Ascending aorta (tissue), 2 donors: ENCODE measurements at regions of chr16 and their contacts with region 1.

Region 1: GRCh38 chr16:88706288-88706964 is at the starts of genes CTU2 and RNF166:
- DNase-seq: peak; percentile 64 to 94
- H3K4me3 ChIP-seq: peak within 1 kb of the TSS; percentile 94 to 98
- H3K27ac ChIP-seq: peak within 1 kb of the TSS; percentile 73 to 81
- H3K4me1 ChIP-seq: peaks cover 9 to 21% of the 10 kb centered on the region in 2 donors
- H3K27me3 ChIP-seq: no peaks in the 10 kb centered on the region
- CTCF ChIP-seq: no peak
- total RNA-seq, gene CTU2: 4.2 TPM
- total RNA-seq, gene RNF166: 44.3 TPM

Region 2: GRCh38 chr16:87765776-87766484 is 940.5 kb before region 1 on chr16 and contains the start of gene KLHDC4:
- intact Hi-C with region 1: loop called (anchors 5 kb)
- DNase-seq: peak; percentile 57 to 94
- H3K4me3 ChIP-seq: peak within 1 kb of the TSS; percentile 72 to 81
- H3K27ac ChIP-seq: peak within 1 kb of the TSS; percentile 81 to 86
- H3K4me1 ChIP-seq: peaks cover 8 to 9% of the 10 kb centered on the region in 2 donors
- H3K27me3 ChIP-seq: no peaks in the 10 kb centered on the region
- CTCF ChIP-seq: no peak
- total RNA-seq, gene KLHDC4: 38.4 TPM

Region 3: GRCh38 chr16:87950765-87951549 is 755.5 kb before region 1 on chr16 and contains the start of gene BANP:
- intact Hi-C with region 1: loop called (anchors 2 kb)
- DNase-seq: peak; percentile 96 to 99
- H3K4me3 ChIP-seq: peak within 1 kb of the TSS; percentile 95 to 99
- H3K27ac ChIP-seq: peak within 1 kb of the TSS; percentile 97 to 98
- H3K4me1 ChIP-seq: peaks cover 0 to 9% of the 10 kb centered on the region in 2 donors
- H3K27me3 ChIP-seq: no peaks in the 10 kb centered on the region
- CTCF ChIP-seq: peak; percentile 14 to 39 (median 36)
- total RNA-seq, gene BANP: 23.4 TPM

Region 4: DNA sequence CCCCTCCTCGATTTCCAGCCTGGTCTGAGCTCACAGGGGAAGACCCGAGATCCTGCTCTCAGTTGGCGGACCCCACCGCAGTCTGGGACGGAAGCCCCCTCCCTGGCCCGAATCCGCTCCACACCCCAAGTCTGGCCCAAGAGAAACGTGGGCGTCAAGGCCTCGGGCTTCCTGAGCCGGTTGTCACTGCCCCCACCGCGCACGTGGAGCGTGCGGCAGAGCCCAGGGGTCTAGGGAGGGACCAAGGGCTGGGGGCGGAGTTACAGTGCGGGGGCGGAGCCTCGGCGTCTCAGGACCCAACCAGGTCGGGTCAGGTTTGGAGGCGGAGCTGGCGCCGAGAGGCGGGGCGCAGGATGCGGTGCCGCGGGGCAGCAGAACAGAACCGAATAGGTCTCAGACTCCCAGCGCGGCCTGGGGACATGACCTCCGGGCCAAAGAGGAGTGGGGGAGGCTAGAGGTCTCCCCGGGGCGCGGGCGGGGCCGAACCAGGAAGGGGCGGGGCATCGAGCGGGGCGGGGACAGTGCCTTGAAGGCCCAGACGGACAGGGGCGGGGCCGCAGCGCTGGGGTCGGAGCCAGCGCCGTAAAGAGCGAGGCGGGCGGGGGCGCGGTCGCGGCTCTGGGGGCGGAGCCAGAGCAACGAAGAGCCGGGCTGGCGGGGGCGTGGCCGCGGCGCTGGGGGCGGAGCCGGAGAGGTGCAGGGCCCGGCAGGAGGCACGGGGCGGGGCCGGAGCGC is 253.8 kb before region 1 on chr16:
- intact Hi-C with region 1: loop called (anchors 2 kb)
- DNase-seq: peak; percentile 84 to 98
- H3K4me3 ChIP-seq: peak overlapping the region; percentile 75 to 84
- H3K27ac ChIP-seq: peak overlapping the region; percentile 56 to 58
- H3K4me1 ChIP-seq: peaks cover 7 to 24% of the 10 kb centered on the region in 2 donors
- H3K27me3 ChIP-seq: no peaks in the 10 kb centered on the region
- CTCF ChIP-seq: no peak

Region 5: GRCh38 chr16:88662843-88663606 is 43.4 kb before region 1 on chr16 and contains the start of gene MVD:
- intact Hi-C with region 1: loop called (anchors 2 kb)
- DNase-seq: peak; percentile 93 to 98
- H3K4me3 ChIP-seq: peak within 1 kb of the TSS; percentile 87 to 89
- H3K27ac ChIP-seq: peak within 1 kb of the TSS; percentile 68 to 72
- H3K4me1 ChIP-seq: peaks cover 0 to 11% of the 10 kb centered on the region in 2 donors
- H3K27me3 ChIP-seq: no peaks in the 10 kb centered on the region
- CTCF ChIP-seq: no peak
- total RNA-seq, gene MVD: 72.9 TPM

Region 6: GRCh38 chr16:88856828-88857733 is 150.7 kb after region 1 on chr16 and contains the starts of genes GALNS and TRAPPC2L:
- intact Hi-C with region 1: loop called (anchors 2 kb)
- DNase-seq: peak; percentile 92 to 99
- H3K4me3 ChIP-seq: peak within 1 kb of the TSS; percentile 64 to 87
- H3K27ac ChIP-seq: peak within 1 kb of the TSS; percentile 54 to 66
- H3K4me1 ChIP-seq: peaks cover 13 to 14% of the 10 kb centered on the region in 2 donors
- H3K27me3 ChIP-seq: no peaks in the 10 kb centered on the region
- CTCF ChIP-seq: no peak
- total RNA-seq, gene GALNS: 62.2 TPM
- total RNA-seq, gene TRAPPC2L: 7.6 TPM

Region 7: DNA sequence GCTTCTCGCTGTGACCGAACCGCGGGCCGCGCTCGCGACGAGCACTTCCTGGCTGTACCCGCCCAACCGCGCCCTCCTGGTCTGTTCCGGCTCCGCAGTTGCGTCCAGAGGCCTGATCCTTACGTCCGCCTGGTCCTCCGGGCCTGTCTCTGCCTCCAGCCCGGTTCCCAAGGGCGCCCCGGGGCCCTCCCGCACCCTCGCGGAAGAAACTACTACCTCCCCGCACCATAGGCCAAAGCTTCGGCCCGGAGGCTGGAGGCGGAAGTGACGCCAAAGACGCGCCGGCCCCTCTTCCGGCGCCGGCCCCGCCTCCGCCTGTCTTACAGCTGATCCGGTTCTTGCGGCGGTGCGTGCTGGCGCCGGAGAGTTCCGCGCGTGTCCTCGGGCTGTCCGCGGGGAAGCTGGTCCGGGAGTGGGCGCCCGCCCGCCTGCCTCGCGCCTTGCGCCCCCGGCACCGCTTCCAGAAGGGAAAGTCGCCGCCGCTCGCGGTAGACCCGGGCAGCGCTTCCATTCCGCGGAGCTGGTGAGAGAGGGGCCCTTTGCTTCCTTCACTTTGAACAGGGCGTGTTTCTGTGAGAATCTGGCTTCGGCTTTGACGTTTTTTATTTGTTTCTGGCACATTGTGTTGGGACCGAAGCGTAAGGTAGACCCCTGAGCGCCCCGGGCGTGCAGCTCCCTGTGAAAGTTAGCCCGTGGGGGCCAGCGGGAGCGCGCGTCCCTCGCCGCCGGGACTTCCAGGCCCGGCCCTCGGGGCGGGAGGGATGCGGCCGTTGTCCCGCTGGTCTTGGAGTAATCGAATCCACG is 511.2 kb after region 1 on chr16 and contains the start of gene ZNF778:
- intact Hi-C with region 1: loop called (anchors 2 kb)
- DNase-seq: peak; percentile 21 to 90
- H3K4me3 ChIP-seq: peak within 1 kb of the TSS; percentile 75 to 83
- H3K27ac ChIP-seq: peak within 1 kb of the TSS; percentile 91 to 96
- H3K4me1 ChIP-seq: peaks cover 7 to 21% of the 10 kb centered on the region in 2 donors
- H3K27me3 ChIP-seq: no peaks in the 10 kb centered on the region
- CTCF ChIP-seq: peak in 1 of 3 experiments; percentile 5
- total RNA-seq, gene ZNF778: 1.5 TPM